ENCODE measurements at regions of chr14 and their contacts with region 1.

Region 1: GRCh38 chr14:63388763-63389431 is 70.2 kb upstream of the GPHB5 start:
- DNase-seq: peak; percentile 24
- ATAC-seq: peak; percentile 98
- H3K4me3 ChIP-seq: no peak overlapping the region
- H3K27ac ChIP-seq: no peak overlapping the region
- H3K4me1 ChIP-seq: peaks cover 2% of the 10 kb centered on the region; the same call in 1 of the 2 replicates
- H3K27me3 ChIP-seq: no peaks in the 10 kb centered on the region
- CTCF ChIP-seq: peak; percentile 88 to 89 (median 88)
- EP300 ChIP-seq: no peak
- POLR2A ChIP-seq: no peak
- RAD21 ChIP-seq: peak; percentile 96

Region 2: GRCh38 chr14:63614679-63615363 is 225.9 kb after region 1 on chr14:
- CTCF ChIA-PET with region 1: interaction called, 7 read pairs
- POLR2A ChIA-PET with region 1: no interaction called
- RAD21 ChIA-PET with region 1: interaction called, 4 read pairs
- SMC1A ChIA-PET with region 1: interaction called, 3 read pairs
- in situ Hi-C with region 1: no loop called
- intact Hi-C with region 1: loop called (anchors 5 kb)
- DNase-seq: no peak
- ATAC-seq: no peak
- H3K4me3 ChIP-seq: no peak overlapping the region
- H3K27ac ChIP-seq: no peak overlapping the region
- H3K4me1 ChIP-seq: peaks cover 4% of the 10 kb centered on the region
- H3K27me3 ChIP-seq: no peaks in the 10 kb centered on the region
- CTCF ChIP-seq: no peak
- EP300 ChIP-seq: no peak
- POLR2A ChIP-seq: no peak
- RAD21 ChIP-seq: no peak

Region 3: GRCh38 chr14:63632932-63633514 is 244.1 kb after region 1 on chr14:
- CTCF ChIA-PET with region 1: interaction called, 31 read pairs
- POLR2A ChIA-PET with region 1: no interaction called
- RAD21 ChIA-PET with region 1: interaction called, 8 read pairs
- SMC1A ChIA-PET with region 1: interaction called, 8 read pairs
- in situ Hi-C with region 1: no loop called
- intact Hi-C with region 1: loop called (anchors 2 kb)
- DNase-seq: no peak
- ATAC-seq: peak; percentile 94
- H3K4me3 ChIP-seq: no peak overlapping the region
- H3K27ac ChIP-seq: no peak overlapping the region
- H3K4me1 ChIP-seq: no peaks in the 10 kb centered on the region
- H3K27me3 ChIP-seq: no peaks in the 10 kb centered on the region
- CTCF ChIP-seq: peak; percentile 48 to 60 (median 48); a peak in 5 of 6 replicates
- EP300 ChIP-seq: no peak
- POLR2A ChIP-seq: no peak
- RAD21 ChIP-seq: peak; percentile 60

Region 4: DNA sequence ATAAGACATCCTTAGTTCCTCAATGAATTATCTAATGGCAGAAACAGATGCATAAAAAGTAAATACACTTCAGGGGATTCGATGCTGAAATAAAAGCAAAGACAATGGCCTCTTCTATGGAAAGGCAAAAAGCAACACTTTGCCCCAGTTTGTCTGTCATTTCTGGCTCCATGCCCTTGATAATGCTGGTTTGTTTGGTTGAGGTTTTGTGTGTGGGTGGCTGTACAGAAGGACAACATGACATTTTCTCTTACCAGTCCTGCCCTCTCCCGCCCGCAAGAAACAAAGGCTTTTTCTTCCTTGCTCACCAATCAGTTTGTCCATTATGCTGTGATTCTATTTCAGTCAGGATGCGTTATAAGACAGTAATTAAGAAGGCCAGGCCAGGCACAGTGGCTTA is 270.8 kb after region 1 on chr14:
- CTCF ChIA-PET with region 1: no interaction called
- POLR2A ChIA-PET with region 1: no interaction called
- RAD21 ChIA-PET with region 1: no interaction called
- SMC1A ChIA-PET with region 1: no interaction called
- in situ Hi-C with region 1: no loop called
- intact Hi-C with region 1: no loop called
- DNase-seq: no peak
- ATAC-seq: no peak
- H3K4me3 ChIP-seq: no peak overlapping the region
- H3K27ac ChIP-seq: no peak overlapping the region
- H3K4me1 ChIP-seq: no peaks in the 10 kb centered on the region
- H3K27me3 ChIP-seq: no peaks in the 10 kb centered on the region
- CTCF ChIP-seq: no peak
- EP300 ChIP-seq: no peak
- POLR2A ChIP-seq: no peak
- RAD21 ChIP-seq: no peak